Activated CD8-positive, alpha-beta T cell treated with anti-CD3 and anti-CD28 coated beads for 36 hours (primary cell): ENCODE measurements at regions of chr6 and their contacts with region 1.

Region 1: GRCh38 chr6:30326526-30327260 is at the start of gene TRIM39:
- DNase-seq: peak; percentile 92
- ATAC-seq: peak; percentile 63
- H3K4me3 Mint-ChIP-seq: peak within 1 kb of the TSS; percentile 94
- H3K27ac Mint-ChIP-seq: peak within 1 kb of the TSS; percentile 99
- H3K4me1 Mint-ChIP-seq: peaks cover 52% of the 10 kb centered on the region
- H3K27me3 Mint-ChIP-seq: no peaks in the 10 kb centered on the region
- CTCF ChIP-seq: no peak
- total RNA-seq, gene TRIM39: 21.6 to 22.3 TPM

Region 2: DNA sequence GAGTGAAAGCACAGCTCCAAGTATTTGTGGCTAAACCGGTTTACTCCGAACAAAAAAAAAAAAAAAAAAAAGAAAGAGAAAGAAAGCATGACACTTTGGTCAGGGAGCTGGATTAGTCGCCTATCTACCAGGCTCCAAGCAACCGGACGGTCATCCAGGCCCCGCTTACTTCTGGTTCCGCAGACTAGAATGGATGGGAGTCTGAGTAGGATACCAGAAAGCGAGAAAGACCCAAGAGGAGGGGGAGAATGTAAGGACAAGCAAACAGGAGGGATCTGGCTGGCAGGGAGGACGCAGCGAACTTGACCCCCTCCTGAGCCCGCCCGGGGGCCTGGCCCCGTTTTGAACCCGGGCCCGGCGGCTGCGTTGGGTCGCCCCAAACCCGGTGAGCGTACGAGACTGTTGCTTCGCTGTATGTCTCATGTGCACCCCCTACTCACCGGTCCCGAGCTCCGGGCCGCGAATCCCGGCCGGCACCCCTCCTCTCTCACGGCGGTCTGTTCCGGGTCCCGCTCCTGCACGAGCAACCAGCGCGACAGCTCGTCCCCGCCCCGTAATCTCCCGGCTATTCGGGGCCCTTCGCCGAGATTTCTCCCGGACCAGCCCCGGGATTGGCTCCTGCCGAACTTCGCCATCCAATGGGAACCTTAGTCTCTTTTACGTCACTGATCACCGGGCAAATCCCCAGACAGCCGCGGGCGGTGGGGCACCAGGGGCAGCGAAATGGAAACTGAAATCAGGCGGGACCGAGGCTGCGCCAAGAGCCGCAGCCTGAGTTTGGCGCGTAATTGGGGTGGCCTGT is 113.6 kb before region 1 on chr6 and contains the start of gene TRIM26:
- CTCF ChIA-PET with region 1: no interaction called
- POLR2A ChIA-PET with region 1: interaction called, 27 read pairs
- intact Hi-C with region 1: loop called (anchors 10 kb)
- DNase-seq: peak; percentile 98
- ATAC-seq: peak; percentile 87
- H3K4me3 Mint-ChIP-seq: peak within 1 kb of the TSS; percentile 90
- H3K27ac Mint-ChIP-seq: peak within 1 kb of the TSS; percentile 99
- H3K4me1 Mint-ChIP-seq: peaks cover 48% of the 10 kb centered on the region
- H3K27me3 Mint-ChIP-seq: no peaks in the 10 kb centered on the region
- CTCF ChIP-seq: no peak
- total RNA-seq, gene TRIM26: 43.4 to 45.0 TPM

Region 3: GRCh38 chr6:30340589-30341054 is 13.9 kb after region 1 on chr6:
- CTCF ChIA-PET with region 1: interaction called, 3 read pairs
- POLR2A ChIA-PET with region 1: interaction called, 15 read pairs
- intact Hi-C with region 1: no loop called
- DNase-seq: no peak
- ATAC-seq: no peak
- H3K4me3 Mint-ChIP-seq: no peak overlapping the region
- H3K27ac Mint-ChIP-seq: no peak overlapping the region
- H3K4me1 Mint-ChIP-seq: peaks cover 21% of the 10 kb centered on the region
- H3K27me3 Mint-ChIP-seq: no peaks in the 10 kb centered on the region
- CTCF ChIP-seq: no peak

Region 4: GRCh38 chr6:30350524-30350923 is 23.8 kb after region 1 on chr6:
- CTCF ChIA-PET with region 1: no interaction called
- POLR2A ChIA-PET with region 1: interaction called, 10 read pairs
- intact Hi-C with region 1: no loop called
- DNase-seq: no peak
- ATAC-seq: no peak
- H3K4me3 Mint-ChIP-seq: no peak overlapping the region
- H3K27ac Mint-ChIP-seq: no peak overlapping the region
- H3K4me1 Mint-ChIP-seq: peaks cover 34% of the 10 kb centered on the region
- H3K27me3 Mint-ChIP-seq: no peaks in the 10 kb centered on the region
- CTCF ChIP-seq: no peak

Region 5: GRCh38 chr6:30470968-30471367 is 144.3 kb after region 1 on chr6:
- CTCF ChIA-PET with region 1: no interaction called
- POLR2A ChIA-PET with region 1: no interaction called
- intact Hi-C with region 1: no loop called
- DNase-seq: no peak
- ATAC-seq: no peak
- H3K4me3 Mint-ChIP-seq: no peak overlapping the region
- H3K27ac Mint-ChIP-seq: no peak overlapping the region
- H3K4me1 Mint-ChIP-seq: peaks cover 9% of the 10 kb centered on the region
- H3K27me3 Mint-ChIP-seq: peaks cover 71% of the 10 kb centered on the region
- CTCF ChIP-seq: no peak